PC-3 (cell line): ENCODE measurements at regions of chr12 and their contacts with region 1.

Region 1: GRCh38 chr12:107607464-107608392 is 77.9 kb upstream of the PWP1 start:
- DNase-seq: peak; percentile 88
- ATAC-seq: peak; percentile 84
- H3K4me3 ChIP-seq: no peak overlapping the region
- H3K27ac ChIP-seq: no peak overlapping the region
- H3K4me1 ChIP-seq: 0 out of 2 replicates have a peak, but pooled peaks cover 4% of the 10 kb centered on the region
- H3K27me3 ChIP-seq: no peaks in the 10 kb centered on the region
- CTCF ChIP-seq: peak; percentile 97

Region 2: GRCh38 chr12:107126796-107127481 is 480.8 kb before region 1 on chr12:
- CTCF ChIA-PET with region 1: interaction called, 8 read pairs
- POLR2A ChIA-PET with region 1: no interaction called
- intact Hi-C with region 1: loop called (anchors 1 kb)
- DNase-seq: peak; percentile 54
- ATAC-seq: peak; percentile 49
- H3K4me3 ChIP-seq: no peak overlapping the region
- H3K27ac ChIP-seq: no peak overlapping the region
- H3K4me1 ChIP-seq: peaks cover 1% of the 10 kb centered on the region; the same call in 1 of the 2 replicates
- H3K27me3 ChIP-seq: peaks cover 6% of the 10 kb centered on the region; the same call in 1 of the 2 replicates
- CTCF ChIP-seq: peak; percentile 77

Region 3: GRCh38 chr12:107131832-107132616 is 475.7 kb before region 1 on chr12:
- CTCF ChIA-PET with region 1: interaction called, 8 read pairs
- POLR2A ChIA-PET with region 1: no interaction called
- intact Hi-C with region 1: loop called (anchors 1 kb)
- DNase-seq: peak; percentile 91
- ATAC-seq: peak; percentile 78
- H3K4me3 ChIP-seq: no peak overlapping the region
- H3K27ac ChIP-seq: no peak overlapping the region
- H3K4me1 ChIP-seq: peaks cover 4% of the 10 kb centered on the region; the same call in 1 of the 2 replicates
- H3K27me3 ChIP-seq: no peaks in the 10 kb centered on the region
- CTCF ChIP-seq: peak; percentile 96

Region 4: DNA sequence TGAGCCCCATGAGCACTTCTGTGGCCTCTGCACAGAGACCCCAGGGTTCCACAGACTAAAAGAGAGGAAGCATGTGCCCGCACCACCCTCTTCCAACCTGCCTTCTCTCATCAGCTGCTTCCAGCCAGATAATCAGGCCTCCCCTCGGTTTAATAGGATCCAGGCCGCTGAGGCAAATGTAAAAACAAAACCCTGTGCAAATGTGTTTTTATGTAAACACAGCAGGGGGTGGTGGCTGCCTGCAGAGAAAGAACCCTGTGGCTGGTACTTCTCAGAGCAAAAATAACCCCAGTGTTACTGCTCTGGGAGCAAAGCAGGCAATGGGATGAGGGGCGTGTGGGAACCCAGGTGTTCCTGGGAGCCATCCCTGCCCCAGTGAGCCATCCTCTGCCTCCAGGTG is 567.6 kb after region 1 on chr12:
- CTCF ChIA-PET with region 1: no interaction called
- POLR2A ChIA-PET with region 1: no interaction called
- intact Hi-C with region 1: no loop called
- DNase-seq: no peak
- ATAC-seq: no peak
- H3K4me3 ChIP-seq: no peak overlapping the region
- H3K27ac ChIP-seq: no peak overlapping the region
- H3K4me1 ChIP-seq: no peaks in the 10 kb centered on the region
- H3K27me3 ChIP-seq: peaks cover 11% of the 10 kb centered on the region
- CTCF ChIP-seq: no peak